ENCODE measurements at regions of chr7 and their contacts with region 1.

Region 1: GRCh38 chr7:24965831-24966709 is 13.9 kb downstream of the OSBPL3 start:
- DNase-seq: peak; percentile 61
- H3K4me3 Mint-ChIP-seq: peak overlapping the region; percentile 2
- H3K27ac Mint-ChIP-seq: peak overlapping the region; percentile 74
- H3K4me1 Mint-ChIP-seq: peaks cover 84% of the 10 kb centered on the region
- H3K27me3 Mint-ChIP-seq: no peaks in the 10 kb centered on the region

Region 2: DNA sequence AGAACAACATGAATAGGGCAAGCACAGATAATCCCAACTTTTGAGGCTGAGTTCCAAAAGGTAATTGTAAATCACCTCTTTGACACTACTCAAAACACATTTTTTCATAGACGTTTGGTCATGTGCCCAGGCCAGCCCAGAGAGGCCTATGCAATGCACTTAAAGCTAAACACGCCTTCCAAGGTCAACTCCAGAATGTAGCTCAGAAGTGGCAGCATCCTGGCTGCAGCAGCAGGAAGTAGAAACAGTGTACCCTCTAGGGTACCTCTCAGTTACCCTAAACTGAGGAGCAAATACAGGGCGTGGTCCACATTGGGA is 44.7 kb before region 1 on chr7:
- CTCF ChIA-PET with region 1: no interaction called
- POLR2A ChIA-PET with region 1: interaction called, 13 read pairs
- DNase-seq: peak; percentile 51
- H3K4me3 Mint-ChIP-seq: peak overlapping the region; percentile 26
- H3K27ac Mint-ChIP-seq: peak overlapping the region; percentile 96
- H3K4me1 Mint-ChIP-seq: peaks cover 93% of the 10 kb centered on the region
- H3K27me3 Mint-ChIP-seq: no peaks in the 10 kb centered on the region

Region 3: DNA sequence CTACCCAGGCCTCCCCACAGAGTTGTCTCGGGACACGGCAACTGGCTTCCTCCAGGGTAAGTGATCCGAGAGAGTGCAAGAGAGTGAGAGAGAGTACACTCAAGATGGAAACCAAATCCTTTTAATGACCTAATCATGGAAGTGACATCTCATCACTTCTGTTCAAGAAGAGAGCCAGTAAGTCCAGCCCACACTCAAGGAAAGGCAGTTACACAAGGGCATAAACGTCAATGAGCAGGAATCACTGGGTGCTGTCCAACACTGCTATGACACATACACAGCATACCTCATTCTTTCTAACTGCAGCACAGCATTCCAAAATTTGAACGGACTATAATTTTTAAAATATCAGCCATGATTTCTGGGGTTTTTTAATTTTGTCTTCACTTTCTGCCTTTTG is 43.2 kb after region 1 on chr7:
- CTCF ChIA-PET with region 1: no interaction called
- POLR2A ChIA-PET with region 1: no interaction called
- DNase-seq: no peak
- H3K4me3 Mint-ChIP-seq: no peak overlapping the region
- H3K27ac Mint-ChIP-seq: no peak overlapping the region
- H3K4me1 Mint-ChIP-seq: no peaks in the 10 kb centered on the region
- H3K27me3 Mint-ChIP-seq: peaks cover 8% of the 10 kb centered on the region